SK-N-SH (cell line): ENCODE measurements at regions of chr11 and their contacts with region 1.

Region 1: GRCh38 chr11:19076744-19077589 is 16.4 kb upstream of the MRGPRX2 start:
- DNase-seq: peak; percentile 80
- H3K4me3 ChIP-seq: no peak overlapping the region; a peak in 1 of 4 replicates
- H3K27ac ChIP-seq: peak overlapping the region in 1 of 2 experiments; percentile 39; a peak in 1 of 4 replicates
- H3K4me1 ChIP-seq: peaks cover 0 to 15% of the 10 kb centered on the region in 2 experiments; a peak in 3 of 4 replicates
- H3K27me3 ChIP-seq: no peaks in the 10 kb centered on the region
- CTCF ChIP-seq: peak; percentile 98
- EP300 ChIP-seq: no peak
- RAD21 ChIP-seq: peak; percentile 72

Region 2: GRCh38 chr11:19060629-19061028 is 16.3 kb before region 1 on chr11 and contains the start of gene MRGPRX2:
- CTCF ChIA-PET with region 1: interaction called, 50 read pairs
- POLR2A ChIA-PET with region 1: no interaction called
- DNase-seq: no peak
- H3K4me3 ChIP-seq: no peak within 1 kb of the TSS
- H3K27ac ChIP-seq: no peak within 1 kb of the TSS
- H3K4me1 ChIP-seq: no peaks in the 10 kb centered on the region
- H3K27me3 ChIP-seq: peaks cover 16% of the 10 kb centered on the region
- CTCF ChIP-seq: no peak
- EP300 ChIP-seq: no peak
- RAD21 ChIP-seq: no peak
- polyA plus RNA-seq, gene MRGPRX2: not detected in 2 replicates

Region 3: DNA sequence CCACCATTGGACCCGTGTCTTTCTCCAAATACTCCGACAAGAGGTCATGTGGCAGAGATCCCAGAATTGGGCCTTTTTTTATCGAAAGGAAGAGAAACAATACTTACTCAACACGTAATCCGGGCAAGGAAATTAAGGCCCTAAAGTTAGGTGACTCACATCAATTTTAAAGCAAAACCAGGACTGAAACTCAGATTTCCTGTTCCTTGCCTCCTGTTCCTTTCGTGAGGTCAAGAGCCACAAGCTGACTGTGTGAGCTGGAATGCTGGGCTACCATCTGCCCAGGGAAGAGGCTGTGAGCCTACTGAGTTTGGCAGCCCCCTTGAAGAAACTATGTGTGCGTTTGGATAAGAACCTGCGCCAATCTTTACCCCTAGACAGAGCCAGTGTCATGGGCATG is 10.7 kb after region 1 on chr11:
- CTCF ChIA-PET with region 1: interaction called, 53 read pairs
- POLR2A ChIA-PET with region 1: no interaction called
- DNase-seq: no peak
- H3K4me3 ChIP-seq: no peak overlapping the region
- H3K27ac ChIP-seq: no peak overlapping the region
- H3K4me1 ChIP-seq: no peaks in the 10 kb centered on the region
- H3K27me3 ChIP-seq: no peaks in the 10 kb centered on the region; the same call in 1 of the 2 replicates
- CTCF ChIP-seq: no peak
- EP300 ChIP-seq: no peak
- RAD21 ChIP-seq: no peak

Region 4: GRCh38 chr11:19110280-19110679 is 33.3 kb after region 1 on chr11:
- CTCF ChIA-PET with region 1: interaction called, 21 read pairs
- POLR2A ChIA-PET with region 1: no interaction called
- DNase-seq: no peak
- H3K4me3 ChIP-seq: no peak overlapping the region
- H3K27ac ChIP-seq: no peak overlapping the region
- H3K4me1 ChIP-seq: no peaks in the 10 kb centered on the region; a peak in 1 of 4 replicates
- H3K27me3 ChIP-seq: peaks cover 23% of the 10 kb centered on the region
- CTCF ChIP-seq: no peak
- EP300 ChIP-seq: no peak
- RAD21 ChIP-seq: no peak

Region 5: DNA sequence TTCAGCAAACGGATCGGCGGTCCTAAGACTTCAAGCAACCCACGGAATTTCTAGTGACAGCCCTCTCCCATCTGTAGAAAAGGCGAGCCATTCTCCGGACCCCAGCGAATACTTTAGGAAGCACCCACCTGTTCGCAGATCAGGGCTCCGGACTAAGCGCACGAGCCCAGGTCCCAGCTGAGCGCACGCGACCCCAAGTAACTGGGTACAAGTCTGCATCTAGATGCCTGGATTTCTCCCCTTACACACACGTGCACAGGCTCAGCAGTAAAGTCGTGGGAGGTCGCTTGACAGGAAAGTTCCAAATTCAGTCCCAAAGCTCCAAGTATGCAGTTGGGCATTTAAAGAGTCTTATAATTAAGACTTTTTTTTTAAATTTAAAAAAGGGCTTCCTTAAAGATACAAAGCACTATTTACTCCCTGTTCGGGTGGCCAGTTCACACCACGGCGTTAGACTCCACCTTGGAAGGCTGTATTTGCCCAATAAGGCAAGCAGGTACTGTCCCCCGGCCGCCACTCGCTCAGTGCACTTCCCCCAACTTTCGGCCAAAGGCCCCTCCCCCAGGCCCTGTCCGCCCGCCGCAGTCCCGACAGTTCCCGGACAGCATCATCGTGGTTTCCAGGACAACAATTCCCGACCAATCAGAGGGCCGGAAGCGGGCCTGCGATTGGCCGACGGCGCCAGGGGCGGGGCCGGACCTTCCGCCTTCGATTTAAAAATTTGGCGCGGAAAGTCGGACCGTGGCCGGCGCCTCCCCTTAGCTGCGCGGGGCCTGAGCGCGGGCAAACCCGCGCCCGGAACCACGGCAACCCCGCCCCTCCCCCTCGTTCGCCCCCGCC is 163.7 kb after region 1 on chr11 and contains the start of gene E2F8:
- CTCF ChIA-PET with region 1: interaction called, 11 read pairs
- POLR2A ChIA-PET with region 1: no interaction called
- DNase-seq: peak; percentile 98
- H3K4me3 ChIP-seq: peak within 1 kb of the TSS; percentile 75 to 83
- H3K27ac ChIP-seq: peak within 1 kb of the TSS in 1 of 2 experiments; percentile 36; a peak in 3 of 4 replicates
- H3K4me1 ChIP-seq: peaks cover 0 to 9% of the 10 kb centered on the region in 2 experiments; a peak in 2 of 4 replicates
- H3K27me3 ChIP-seq: no peaks in the 10 kb centered on the region
- CTCF ChIP-seq: no peak
- EP300 ChIP-seq: peak in 1 of 2 experiments; percentile 40; a peak in 2 of 4 replicates
- RAD21 ChIP-seq: no peak
- polyA plus RNA-seq, gene E2F8: 2.5 and 2.7 TPM in 2 replicates

Region 6: GRCh38 chr11:19290356-19290755 is 213.4 kb after region 1 on chr11:
- CTCF ChIA-PET with region 1: no interaction called
- POLR2A ChIA-PET with region 1: no interaction called
- DNase-seq: no peak
- H3K4me3 ChIP-seq: no peak overlapping the region
- H3K27ac ChIP-seq: no peak overlapping the region
- H3K4me1 ChIP-seq: no peaks in the 10 kb centered on the region
- H3K27me3 ChIP-seq: peaks cover 9% of the 10 kb centered on the region
- CTCF ChIP-seq: no peak
- EP300 ChIP-seq: no peak
- RAD21 ChIP-seq: no peak